ENCODE measurements at regions of chr2 and their contacts with region 1.

Region 1: DNA sequence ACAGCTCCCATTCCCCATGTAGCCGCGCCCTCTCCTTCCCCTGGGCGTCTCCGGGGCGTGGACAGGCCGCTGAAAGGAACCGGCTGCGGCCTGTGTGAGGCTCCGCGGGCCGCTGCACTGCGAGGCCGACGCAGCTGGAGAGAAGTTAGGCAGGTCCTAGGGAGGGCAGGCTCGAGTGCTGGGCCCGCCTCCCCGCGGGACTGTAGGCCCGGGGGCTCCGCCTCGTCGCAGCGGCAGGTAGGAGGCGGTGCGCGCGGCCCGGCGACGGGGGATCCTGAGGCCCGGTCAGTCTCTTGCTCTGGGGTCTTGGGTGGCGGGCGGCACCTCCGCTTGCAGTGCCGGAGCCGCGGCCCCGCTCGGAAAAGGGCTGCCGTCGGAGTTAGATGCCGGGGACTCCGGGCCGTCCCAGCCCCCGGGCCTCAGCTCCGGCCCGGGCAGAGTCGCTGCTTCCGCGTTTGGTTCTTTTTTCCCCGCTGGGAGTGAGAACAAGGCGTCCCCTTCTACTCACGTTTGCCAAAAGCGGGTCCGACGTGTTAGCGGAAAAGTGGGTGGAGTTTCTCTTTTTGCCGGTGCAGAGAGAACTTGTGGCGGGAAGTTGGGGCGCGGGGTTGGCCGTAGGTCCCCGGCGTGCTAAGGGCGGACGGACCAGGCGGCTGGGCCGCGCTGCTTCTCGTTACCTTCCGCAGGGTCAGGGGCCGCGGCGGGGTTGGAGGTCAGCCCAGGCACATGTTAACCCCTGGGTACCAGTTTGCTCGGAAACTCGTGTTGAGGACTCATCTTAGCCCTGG is at the start of gene VRK2:
- DNase-seq: peak; percentile 97
- ATAC-seq: peak; percentile 92
- H3K4me3 ChIP-seq: peak within 1 kb of the TSS; percentile 88
- H3K27ac ChIP-seq: peak within 1 kb of the TSS; percentile 92
- H3K4me1 ChIP-seq: peaks cover 52% of the 10 kb centered on the region
- H3K27me3 ChIP-seq: no peaks in the 10 kb centered on the region
- CTCF ChIP-seq: no peak
- total RNA-seq, gene VRK2: 22.7 and 27.6 TPM in 2 replicates

Region 2: GRCh38 chr2:57759822-57760300 is 286.9 kb before region 1 on chr2:
- CTCF ChIA-PET with region 1: no interaction called
- POLR2A ChIA-PET with region 1: no interaction called
- intact Hi-C with region 1: loop called (anchors 2 kb)
- DNase-seq: peak; percentile 93
- ATAC-seq: peak; percentile 96
- H3K4me3 ChIP-seq: peak overlapping the region; percentile 45; the same call in 1 of the 2 replicates
- H3K27ac ChIP-seq: peak overlapping the region; percentile 54
- H3K4me1 ChIP-seq: peaks cover 23% of the 10 kb centered on the region
- H3K27me3 ChIP-seq: no peaks in the 10 kb centered on the region
- CTCF ChIP-seq: peak; percentile 95

Region 3: DNA sequence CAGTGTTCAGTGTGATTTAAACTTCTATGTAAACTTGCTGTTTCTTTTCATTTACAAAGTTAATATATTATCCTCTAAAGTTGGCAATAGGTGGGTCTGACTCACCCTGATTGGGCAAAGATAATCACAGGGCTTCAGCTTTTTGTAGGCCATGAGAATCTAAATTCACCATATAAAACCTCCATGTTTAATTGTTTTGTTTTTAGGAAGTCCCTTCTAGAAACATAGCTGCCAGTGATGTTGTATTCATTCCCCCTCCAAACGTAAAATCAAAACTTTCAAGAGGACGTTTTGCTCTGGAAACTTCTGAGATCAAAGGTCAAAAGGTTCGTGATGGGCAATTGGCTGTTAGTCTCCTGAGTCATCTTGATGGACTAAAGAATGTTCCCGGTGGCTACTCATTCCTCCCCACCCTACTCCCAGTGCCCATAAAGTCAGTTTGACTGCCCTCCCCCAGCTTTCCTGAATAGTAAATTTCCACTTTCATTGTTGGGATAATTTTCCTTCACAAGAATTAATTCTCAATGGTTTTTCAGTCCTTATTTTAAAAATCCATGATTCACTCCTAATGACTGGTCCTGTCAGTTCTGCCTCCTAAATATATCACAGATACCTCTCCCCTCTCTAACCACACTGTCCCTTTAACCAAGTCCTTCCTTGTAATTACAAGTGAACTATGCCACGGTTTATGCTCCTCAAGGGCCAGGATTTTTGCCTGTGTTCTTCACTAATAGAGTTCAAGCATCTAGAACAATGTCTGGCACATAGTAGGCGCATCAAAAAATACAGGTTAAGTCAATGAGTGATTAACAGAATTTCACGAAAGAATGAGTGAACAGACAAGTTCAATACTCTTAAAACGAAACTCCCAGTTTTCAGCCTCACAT is 164.5 kb before region 1 on chr2:
- CTCF ChIA-PET with region 1: no interaction called
- POLR2A ChIA-PET with region 1: no interaction called
- intact Hi-C with region 1: loop called (anchors 1 kb)
- DNase-seq: peak; percentile 95
- ATAC-seq: peak; percentile 76
- H3K4me3 ChIP-seq: peak overlapping the region; percentile 49
- H3K27ac ChIP-seq: peak overlapping the region; percentile 97
- H3K4me1 ChIP-seq: peaks cover 84% of the 10 kb centered on the region
- H3K27me3 ChIP-seq: no peaks in the 10 kb centered on the region
- CTCF ChIP-seq: no peak

Region 4: DNA sequence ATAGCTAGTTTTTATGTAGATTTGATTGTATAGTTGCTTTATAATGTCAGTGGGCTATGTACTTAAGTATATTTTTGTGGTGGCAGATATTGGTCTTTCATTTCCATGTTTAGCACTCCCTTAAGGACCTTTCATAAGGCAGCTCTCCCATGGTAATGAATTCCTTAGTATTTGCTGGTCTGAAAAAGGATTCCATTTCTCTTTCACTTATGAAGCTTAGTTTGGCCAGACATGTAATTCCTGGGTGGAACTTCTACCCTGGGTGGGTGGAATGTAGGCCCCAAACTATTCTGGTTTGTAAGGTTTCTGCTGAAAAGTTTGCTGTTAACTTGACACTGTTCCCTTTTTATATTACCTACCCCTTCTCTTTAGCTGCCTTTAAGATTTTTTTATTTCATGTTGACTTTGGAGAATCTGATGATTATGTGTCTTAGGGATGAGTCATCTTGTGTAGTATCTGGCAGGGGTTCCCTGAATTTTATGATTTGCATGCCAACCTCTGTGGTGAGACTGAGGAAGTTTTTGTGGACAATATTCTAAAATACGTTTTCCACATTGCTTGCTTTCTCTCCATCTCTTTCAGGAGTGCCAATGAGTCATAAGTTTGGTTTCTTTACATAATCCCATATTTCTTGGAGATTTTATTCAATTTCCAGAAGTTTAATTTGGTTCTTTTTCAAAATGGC is 65.6 kb before region 1 on chr2:
- CTCF ChIA-PET with region 1: no interaction called
- POLR2A ChIA-PET with region 1: no interaction called
- intact Hi-C with region 1: loop called (anchors 1 kb)
- DNase-seq: peak; percentile 96
- ATAC-seq: peak; percentile 93
- H3K4me3 ChIP-seq: no peak overlapping the region
- H3K27ac ChIP-seq: peak overlapping the region; percentile 86
- H3K4me1 ChIP-seq: peaks cover 23% of the 10 kb centered on the region
- H3K27me3 ChIP-seq: no peaks in the 10 kb centered on the region
- CTCF ChIP-seq: no peak

Region 5: DNA sequence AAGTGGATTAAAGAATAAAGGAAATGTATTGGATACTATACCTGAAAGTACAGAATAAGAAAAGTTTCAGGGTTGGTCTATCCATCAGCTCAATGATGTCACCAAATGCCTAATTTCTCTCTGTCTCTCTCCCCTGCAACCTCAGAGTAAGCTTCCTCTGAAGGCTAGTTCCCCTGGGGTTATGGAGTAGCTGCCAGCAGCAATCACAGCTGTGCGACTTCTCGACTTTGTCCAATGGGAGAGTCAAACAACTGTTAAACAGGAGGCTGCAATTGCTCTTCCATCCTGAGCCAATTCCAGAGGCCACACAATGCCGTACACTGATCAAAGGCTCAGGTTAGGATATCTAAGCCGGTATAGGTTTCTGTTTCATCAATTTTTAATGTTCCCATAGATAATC is 289.6 kb after region 1 on chr2:
- CTCF ChIA-PET with region 1: no interaction called
- POLR2A ChIA-PET with region 1: no interaction called
- intact Hi-C with region 1: loop called (anchors 1 kb)
- DNase-seq: no peak
- ATAC-seq: no peak
- H3K4me3 ChIP-seq: no peak overlapping the region
- H3K27ac ChIP-seq: no peak overlapping the region
- H3K4me1 ChIP-seq: peaks cover 25% of the 10 kb centered on the region
- H3K27me3 ChIP-seq: no peaks in the 10 kb centered on the region
- CTCF ChIP-seq: no peak

Region 6: GRCh38 chr2:58664523-58665151 is 617.9 kb after region 1 on chr2:
- CTCF ChIA-PET with region 1: no interaction called
- POLR2A ChIA-PET with region 1: no interaction called
- intact Hi-C with region 1: no loop called
- DNase-seq: no peak
- ATAC-seq: no peak
- H3K4me3 ChIP-seq: no peak overlapping the region
- H3K27ac ChIP-seq: no peak overlapping the region
- H3K4me1 ChIP-seq: no peaks in the 10 kb centered on the region
- H3K27me3 ChIP-seq: no peaks in the 10 kb centered on the region
- CTCF ChIP-seq: no peak

Measured in PC-3 (cell line).